GM12878 (cell line): ENCODE measurements at regions of chr10 and their contacts with region 1.

Region 1: DNA sequence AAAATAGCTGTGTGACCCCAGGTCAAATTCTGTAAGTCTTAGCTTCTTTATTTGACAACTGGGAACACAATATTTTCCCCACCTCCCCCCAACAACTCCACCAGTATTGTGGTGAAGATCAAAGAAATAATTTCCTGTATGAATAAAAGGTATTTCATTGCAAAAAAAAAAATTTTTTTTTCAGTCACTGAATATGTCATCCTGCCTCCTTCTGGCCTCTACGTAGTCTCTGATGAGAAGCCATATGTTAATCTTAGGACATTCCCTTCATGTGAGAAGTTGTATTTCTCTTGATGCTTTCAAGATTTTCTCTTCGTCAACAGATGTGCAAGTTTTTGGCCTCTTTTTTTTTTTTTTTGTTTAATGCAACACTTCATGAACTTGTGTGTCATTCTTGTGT is 33.0 kb downstream of the ZNF33A start:
- DNase-seq: no peak
- ATAC-seq: no peak
- H3K4me3 ChIP-seq: no peak overlapping the region
- H3K27ac ChIP-seq: no peak overlapping the region
- H3K4me1 ChIP-seq: peaks cover 8% of the 10 kb centered on the region
- H3K27me3 ChIP-seq: no peaks in the 10 kb centered on the region
- CTCF ChIP-seq: no peak
- EP300 ChIP-seq: no peak
- POLR2A ChIP-seq: no peak
- RAD21 ChIP-seq: no peak

Region 2: DNA sequence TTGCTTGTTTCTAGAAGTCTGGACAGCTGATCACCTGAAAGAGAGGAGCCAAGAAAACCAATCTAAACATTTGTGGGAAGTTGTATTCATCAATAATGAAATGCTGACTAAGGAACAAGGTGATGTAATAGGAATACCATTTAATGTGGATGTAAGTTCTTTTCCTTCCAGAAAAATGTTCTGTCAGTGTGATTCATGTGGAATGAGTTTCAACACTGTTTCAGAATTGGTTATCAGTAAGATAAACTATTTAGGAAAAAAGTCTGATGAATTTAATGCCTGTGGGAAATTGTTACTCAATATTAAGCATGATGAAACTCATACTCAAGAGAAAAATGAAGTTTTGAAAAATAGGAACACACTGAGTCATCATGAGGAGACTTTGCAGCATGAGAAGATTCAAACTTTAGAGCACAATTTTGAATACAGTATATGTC is 10.9 kb after region 1 on chr10:
- CTCF ChIA-PET with region 1: no interaction called
- POLR2A ChIA-PET with region 1: no interaction called
- RAD21 ChIA-PET with region 1: interaction called, 3 read pairs
- SMC1A ChIA-PET with region 1: interaction called, 3 read pairs
- in situ Hi-C with region 1: no loop called
- intact Hi-C with region 1: loop called (anchors 2 kb)
- DNase-seq: no peak
- ATAC-seq: no peak
- H3K4me3 ChIP-seq: no peak overlapping the region
- H3K27ac ChIP-seq: no peak overlapping the region
- H3K4me1 ChIP-seq: no peaks in the 10 kb centered on the region
- H3K27me3 ChIP-seq: no peaks in the 10 kb centered on the region
- CTCF ChIP-seq: no peak
- EP300 ChIP-seq: no peak
- POLR2A ChIP-seq: no peak
- RAD21 ChIP-seq: no peak